ENCODE measurements at regions of chr15 and their contacts with region 1.

Region 1: DNA sequence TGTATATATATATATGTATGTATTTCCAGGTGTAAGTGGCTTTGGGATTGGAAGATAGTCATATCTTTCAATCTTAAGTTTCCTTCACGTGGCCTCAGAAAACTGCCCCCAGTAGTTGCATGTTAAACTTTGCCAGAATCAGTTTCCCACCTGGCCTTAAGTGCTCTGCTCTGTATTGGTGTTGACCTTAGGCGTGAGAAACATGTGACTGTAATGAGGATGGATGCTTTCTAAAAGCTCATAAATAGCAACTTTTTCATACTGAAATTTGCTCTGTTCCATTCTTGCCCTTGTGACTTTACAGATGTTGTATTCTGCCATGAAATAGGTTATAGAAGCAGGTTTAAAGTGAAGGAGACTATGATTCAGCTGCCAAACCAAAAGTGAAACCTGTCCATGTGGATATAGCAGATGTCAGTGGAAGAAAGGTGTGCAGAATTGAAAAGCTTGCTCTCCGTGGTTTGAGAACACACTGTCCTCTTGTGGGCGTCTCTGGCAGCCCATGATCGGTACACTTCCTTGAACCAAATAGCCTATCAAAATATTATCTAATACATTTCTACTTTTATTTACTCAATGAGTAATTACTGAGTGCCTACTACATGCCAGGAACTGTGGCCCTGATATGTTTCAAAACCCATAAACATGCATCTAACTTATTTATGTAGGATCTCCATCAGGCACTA is 15.8 kb downstream of the SCG5 start:
- DNase-seq: no peak
- ATAC-seq: peak; percentile 66
- H3K4me3 Mint-ChIP-seq: no peak overlapping the region
- H3K27ac Mint-ChIP-seq: peak overlapping the region; percentile 0
- H3K4me1 Mint-ChIP-seq: peaks cover 11% of the 10 kb centered on the region
- H3K27me3 Mint-ChIP-seq: no peaks in the 10 kb centered on the region

Region 2: DNA sequence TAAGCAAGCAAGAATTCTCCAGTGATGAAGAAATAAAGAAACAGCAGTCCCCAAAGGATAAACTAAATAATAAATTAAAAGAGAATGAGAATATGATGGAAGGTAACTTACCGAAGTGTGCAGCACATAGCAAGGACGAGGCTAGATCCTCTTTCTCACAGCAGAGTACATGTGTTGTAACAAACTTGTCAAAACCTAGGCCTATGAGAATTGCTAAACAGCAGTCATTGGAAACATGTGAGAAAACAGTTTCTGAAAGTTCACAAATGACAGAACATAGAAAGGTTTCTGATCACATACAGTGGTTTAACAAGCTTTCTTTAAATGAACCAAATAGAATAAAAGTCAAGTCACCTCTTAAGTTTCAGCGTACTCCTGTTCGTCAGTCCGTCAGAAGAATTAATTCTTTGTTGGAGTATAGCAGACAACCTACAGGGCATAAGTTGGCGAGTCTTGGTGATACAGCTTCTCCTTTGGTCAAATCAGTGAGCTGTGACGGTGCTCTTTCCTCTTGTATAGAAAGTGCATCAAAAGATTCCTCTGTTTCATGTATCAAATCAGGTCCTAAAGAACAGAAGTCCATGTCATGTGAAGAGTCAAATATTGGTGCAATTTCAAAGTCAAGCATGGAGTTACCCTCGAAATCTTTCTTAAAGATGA is 20.3 kb before region 1 on chr15:
- CTCF ChIA-PET with region 1: no interaction called
- DNase-seq: no peak
- ATAC-seq: no peak
- H3K4me3 Mint-ChIP-seq: no peak overlapping the region
- H3K27ac Mint-ChIP-seq: no peak overlapping the region
- H3K4me1 Mint-ChIP-seq: no peaks in the 10 kb centered on the region
- H3K27me3 Mint-ChIP-seq: no peaks in the 10 kb centered on the region

Region 3: DNA sequence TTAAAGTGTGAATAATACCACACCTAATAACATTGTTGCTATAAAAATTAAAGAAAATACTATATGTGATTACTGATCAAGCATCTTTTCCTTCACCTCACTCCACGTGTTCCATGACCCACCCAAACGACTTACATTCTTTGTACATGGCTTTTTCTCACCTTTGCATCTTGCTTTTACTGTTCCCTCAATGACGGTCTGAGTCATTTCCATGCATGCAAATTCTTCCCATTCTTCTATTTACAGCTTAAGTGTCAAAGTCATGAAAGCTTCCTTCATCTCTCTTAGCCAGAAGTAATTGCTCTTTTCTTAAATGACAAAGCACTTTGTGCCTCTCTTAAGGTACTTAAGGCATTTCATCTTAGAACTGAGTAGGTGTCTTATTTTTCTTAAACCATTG is 124.4 kb after region 1 on chr15:
- CTCF ChIA-PET with region 1: no interaction called
- DNase-seq: no peak
- ATAC-seq: no peak
- H3K4me3 Mint-ChIP-seq: no peak overlapping the region
- H3K27ac Mint-ChIP-seq: no peak overlapping the region
- H3K4me1 Mint-ChIP-seq: no peaks in the 10 kb centered on the region
- H3K27me3 Mint-ChIP-seq: peaks cover 4% of the 10 kb centered on the region

Region 4: DNA sequence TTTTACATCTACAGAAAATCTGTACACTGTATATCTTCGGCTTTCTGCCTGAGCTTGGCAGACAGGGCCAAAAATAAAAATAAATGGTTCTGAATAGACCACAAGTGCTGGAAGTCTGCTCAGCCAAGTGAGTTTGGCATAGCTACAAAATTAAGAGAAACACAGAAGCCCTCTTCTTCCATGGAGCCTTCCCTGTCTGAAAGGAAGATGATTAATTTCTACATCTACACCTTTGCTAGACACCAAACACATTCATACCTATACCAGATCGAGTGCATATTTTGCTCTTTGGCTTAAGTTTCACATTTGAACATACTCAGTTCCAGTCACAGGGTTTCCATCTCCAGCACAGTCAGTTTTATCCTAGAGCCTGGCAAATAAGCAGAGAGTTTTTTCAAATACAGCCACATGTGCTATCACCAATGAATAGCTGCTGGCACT is 285.1 kb after region 1 on chr15:
- CTCF ChIA-PET with region 1: no interaction called
- DNase-seq: no peak
- ATAC-seq: no peak
- H3K4me3 Mint-ChIP-seq: no peak overlapping the region
- H3K27ac Mint-ChIP-seq: no peak overlapping the region
- H3K4me1 Mint-ChIP-seq: no peaks in the 10 kb centered on the region
- H3K27me3 Mint-ChIP-seq: no peaks in the 10 kb centered on the region

Region 5: DNA sequence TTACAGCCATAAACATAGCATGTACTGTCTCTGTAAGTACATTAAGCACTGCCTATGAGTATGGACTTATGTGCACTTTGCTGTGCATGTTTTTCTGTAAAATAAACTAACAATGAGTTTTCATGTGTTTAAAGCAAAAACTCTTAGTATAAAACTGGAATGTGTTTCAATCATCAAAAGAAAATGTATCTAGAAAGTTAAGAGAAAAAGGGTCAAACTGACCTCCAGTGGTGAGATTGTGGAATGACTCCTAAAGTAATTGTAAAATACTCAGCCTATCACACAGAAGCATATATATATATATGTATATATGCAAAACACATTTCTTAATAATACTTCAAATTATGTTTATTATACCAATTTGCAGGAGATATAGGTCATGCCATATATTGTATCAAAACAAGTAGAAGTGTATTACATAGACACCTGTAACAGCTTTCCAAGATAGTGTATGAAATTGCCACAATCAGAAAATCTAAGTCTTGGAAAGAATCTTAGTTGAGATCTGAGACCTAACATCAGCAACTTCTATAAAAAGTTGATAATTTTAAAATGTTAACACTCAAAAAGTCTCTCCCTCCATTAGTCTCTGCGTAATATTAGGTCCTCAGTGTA is 337.6 kb after region 1 on chr15:
- CTCF ChIA-PET with region 1: interaction called, 11 read pairs
- DNase-seq: no peak
- ATAC-seq: no peak
- H3K4me3 Mint-ChIP-seq: no peak overlapping the region
- H3K27ac Mint-ChIP-seq: no peak overlapping the region
- H3K4me1 Mint-ChIP-seq: no peaks in the 10 kb centered on the region
- H3K27me3 Mint-ChIP-seq: no peaks in the 10 kb centered on the region